Activated CD4-positive, alpha-beta T cell treated with anti-CD3 and anti-CD28 coated beads, Interleukin-2, amount 10 ng/mL, durations not matched to agents 24 days and 14 days (primary cell): ENCODE measurements at regions of chr5 and their contacts with region 1.

Region 1: DNA sequence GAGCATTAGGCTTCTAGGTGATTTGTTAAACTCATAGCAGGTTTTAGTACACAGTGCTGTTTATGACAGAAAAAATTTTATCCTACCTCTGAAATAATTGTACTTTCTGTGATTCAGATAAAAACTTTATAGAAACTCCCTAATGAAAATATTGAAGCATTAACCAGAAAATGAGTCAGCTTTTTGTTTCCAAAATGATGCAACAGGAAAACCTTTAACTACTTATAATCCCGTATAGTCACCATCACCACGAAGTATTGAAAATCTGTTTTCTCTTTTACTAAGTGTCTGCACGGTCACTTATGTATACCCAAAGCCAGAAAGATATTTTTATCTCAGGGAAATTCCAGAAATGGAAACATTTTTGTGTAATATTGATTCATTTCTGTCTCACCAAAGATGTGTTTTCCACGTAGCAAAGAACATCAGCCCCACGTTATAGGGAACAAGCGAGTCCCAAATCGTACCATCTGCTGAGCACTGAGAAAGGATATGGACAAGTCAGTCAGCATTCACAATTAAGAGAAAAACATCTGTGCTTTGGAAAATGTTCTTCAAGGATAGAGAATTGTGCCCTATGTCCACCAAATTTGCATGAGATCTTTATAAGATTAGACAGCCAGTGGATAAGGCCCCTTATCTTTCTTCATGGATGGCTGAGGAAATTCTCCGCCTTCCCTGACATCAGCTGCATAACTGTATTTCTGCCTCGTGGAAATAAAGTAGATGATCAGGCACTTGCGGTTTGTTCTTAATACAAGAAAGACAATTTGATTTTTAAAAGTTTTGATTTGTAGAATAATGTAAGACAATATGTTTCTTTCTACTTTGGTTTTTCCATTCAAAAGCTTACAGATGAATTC is 41.9 kb downstream of the TNFAIP8 start:
- DNase-seq: no peak
- H3K4me3 Mint-ChIP-seq: peak overlapping the region; percentile 11
- H3K27ac Mint-ChIP-seq: peak overlapping the region; percentile 83
- H3K4me1 Mint-ChIP-seq: peaks cover 61% of the 10 kb centered on the region
- H3K27me3 Mint-ChIP-seq: no peaks in the 10 kb centered on the region

Region 2: DNA sequence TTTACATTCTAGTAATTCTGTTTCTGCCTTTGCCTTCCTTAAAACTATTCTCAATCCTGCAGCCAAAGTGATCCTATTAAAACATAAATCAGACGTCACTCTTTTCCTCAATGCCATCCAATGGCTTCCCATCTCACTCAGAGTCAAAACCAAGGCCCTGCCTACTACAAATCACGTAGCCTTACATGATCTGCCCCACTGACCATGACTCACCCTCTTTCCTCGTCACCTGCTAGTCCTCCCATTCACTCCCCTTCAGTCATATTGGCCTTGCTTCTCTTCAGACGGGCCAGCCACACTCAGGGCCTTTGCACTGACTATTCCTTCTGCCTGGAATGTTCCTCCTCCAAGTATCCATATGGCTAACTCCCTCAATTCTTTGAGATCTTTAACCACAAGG is 365.8 kb before region 1 on chr5:
- intact Hi-C with region 1: loop called (anchors 1 kb)
- DNase-seq: no peak
- H3K4me3 Mint-ChIP-seq: peak overlapping the region; percentile 26
- H3K27ac Mint-ChIP-seq: peak overlapping the region; percentile 7
- H3K4me1 Mint-ChIP-seq: peaks cover 23% of the 10 kb centered on the region
- H3K27me3 Mint-ChIP-seq: no peaks in the 10 kb centered on the region

Region 3: DNA sequence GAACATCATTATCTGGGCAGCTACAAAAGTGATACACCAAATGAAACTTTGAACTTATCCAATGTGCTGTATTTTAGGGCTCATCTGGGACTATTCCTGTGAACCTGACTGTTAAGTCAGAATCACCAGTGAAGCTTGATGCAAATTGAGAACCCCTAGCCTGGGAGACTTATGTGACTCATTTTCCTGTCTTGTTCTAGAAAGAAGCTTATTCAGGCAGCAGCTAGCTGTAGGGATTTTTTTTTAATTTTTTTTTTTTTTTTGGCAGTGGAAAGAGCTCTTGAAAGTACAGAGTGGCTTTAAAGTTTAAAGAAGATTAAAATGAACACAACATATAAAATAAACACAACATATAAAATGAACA is 123.0 kb before region 1 on chr5:
- intact Hi-C with region 1: loop called (anchors 2 kb)
- DNase-seq: peak; percentile 78
- H3K4me3 Mint-ChIP-seq: peak overlapping the region; percentile 95
- H3K27ac Mint-ChIP-seq: peak overlapping the region; percentile 95
- H3K4me1 Mint-ChIP-seq: peaks cover 89% of the 10 kb centered on the region
- H3K27me3 Mint-ChIP-seq: no peaks in the 10 kb centered on the region

Region 4: GRCh38 chr5:119328753-119329602 is 68.8 kb before region 1 on chr5:
- intact Hi-C with region 1: loop called (anchors 1 kb)
- DNase-seq: peak; percentile 86
- H3K4me3 Mint-ChIP-seq: peak overlapping the region; percentile 73
- H3K27ac Mint-ChIP-seq: peak overlapping the region; percentile 92
- H3K4me1 Mint-ChIP-seq: peaks cover 74% of the 10 kb centered on the region
- H3K27me3 Mint-ChIP-seq: no peaks in the 10 kb centered on the region

Region 5: GRCh38 chr5:119367502-119368237 is 30.1 kb before region 1 on chr5:
- intact Hi-C with region 1: loop called (anchors 1 kb)
- DNase-seq: peak; percentile 75
- H3K4me3 Mint-ChIP-seq: peak overlapping the region; percentile 78
- H3K27ac Mint-ChIP-seq: peak overlapping the region; percentile 96
- H3K4me1 Mint-ChIP-seq: peaks cover 69% of the 10 kb centered on the region
- H3K27me3 Mint-ChIP-seq: no peaks in the 10 kb centered on the region

Region 6: DNA sequence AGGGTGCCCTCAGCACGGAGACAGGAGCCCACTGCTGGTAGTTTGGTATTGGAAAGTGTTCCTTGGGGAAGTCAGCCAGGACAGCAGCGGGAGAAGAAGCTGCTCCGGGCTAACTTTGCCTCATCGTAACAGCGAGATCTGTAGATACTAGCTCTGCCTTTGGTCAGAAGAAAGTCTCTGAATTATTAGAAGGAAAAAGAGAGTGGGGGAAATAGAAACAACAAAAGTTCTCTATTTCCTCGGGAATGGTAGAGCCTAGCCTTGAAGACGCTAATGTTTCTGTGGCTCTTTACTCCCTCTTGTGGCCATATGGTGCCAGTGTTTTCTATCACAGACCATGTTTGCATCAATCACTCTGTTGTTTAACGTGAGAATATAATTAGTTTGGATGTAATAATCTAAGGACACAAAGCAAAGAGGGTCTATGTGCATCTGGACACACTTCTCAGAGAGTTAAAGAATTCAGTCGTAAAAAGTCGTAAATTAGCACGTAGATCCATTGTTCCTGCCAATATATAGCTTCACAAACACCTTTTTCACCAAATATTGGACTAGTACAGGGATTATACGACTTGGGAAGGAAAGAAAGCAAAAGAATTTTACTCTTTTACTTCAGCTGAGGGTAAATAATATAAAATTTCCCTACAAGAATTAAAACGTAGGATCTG is 14.3 kb after region 1 on chr5:
- intact Hi-C with region 1: loop called (anchors 2 kb)
- DNase-seq: peak; percentile 87
- H3K4me3 Mint-ChIP-seq: peak overlapping the region; percentile 85
- H3K27ac Mint-ChIP-seq: peak overlapping the region; percentile 70
- H3K4me1 Mint-ChIP-seq: peaks cover 32% of the 10 kb centered on the region
- H3K27me3 Mint-ChIP-seq: peaks cover 10% of the 10 kb centered on the region

Region 7: DNA sequence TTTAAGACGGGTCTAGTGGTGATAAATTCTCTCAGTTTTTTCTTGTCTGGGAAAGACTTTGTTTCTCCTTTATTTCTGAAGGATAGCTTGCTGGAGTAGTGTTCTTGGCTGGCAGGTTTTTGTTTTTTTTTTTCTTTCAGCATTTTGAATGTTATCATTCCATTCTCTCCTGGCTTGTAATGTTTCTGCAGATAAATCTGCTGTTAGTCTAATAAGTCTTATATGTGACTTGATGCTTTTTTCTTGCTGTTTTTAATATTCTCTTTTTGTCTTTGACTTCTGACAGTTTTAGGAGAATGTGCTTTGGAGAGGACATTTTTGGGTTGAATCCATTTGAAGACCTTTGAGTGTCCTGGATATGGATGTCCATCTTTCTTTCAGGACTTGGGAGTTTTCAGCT is 70.5 kb after region 1 on chr5:
- intact Hi-C with region 1: no loop called
- DNase-seq: no peak
- H3K4me3 Mint-ChIP-seq: no peak overlapping the region
- H3K27ac Mint-ChIP-seq: no peak overlapping the region
- H3K4me1 Mint-ChIP-seq: peaks cover 5% of the 10 kb centered on the region
- H3K27me3 Mint-ChIP-seq: no peaks in the 10 kb centered on the region